A673 (cell line): ENCODE measurements at regions of chr3 and their contacts with region 1.

Region 1: GRCh38 chr3:148955544-148956346 is 35.6 kb upstream of the GYG1 start:
- DNase-seq: peak; percentile 63
- H3K4me3 ChIP-seq: no peak overlapping the region
- H3K27ac ChIP-seq: no peak overlapping the region
- H3K4me1 ChIP-seq: no peaks in the 10 kb centered on the region
- H3K27me3 ChIP-seq: no peaks in the 10 kb centered on the region
- CTCF ChIP-seq: peak; percentile 77

Region 2: DNA sequence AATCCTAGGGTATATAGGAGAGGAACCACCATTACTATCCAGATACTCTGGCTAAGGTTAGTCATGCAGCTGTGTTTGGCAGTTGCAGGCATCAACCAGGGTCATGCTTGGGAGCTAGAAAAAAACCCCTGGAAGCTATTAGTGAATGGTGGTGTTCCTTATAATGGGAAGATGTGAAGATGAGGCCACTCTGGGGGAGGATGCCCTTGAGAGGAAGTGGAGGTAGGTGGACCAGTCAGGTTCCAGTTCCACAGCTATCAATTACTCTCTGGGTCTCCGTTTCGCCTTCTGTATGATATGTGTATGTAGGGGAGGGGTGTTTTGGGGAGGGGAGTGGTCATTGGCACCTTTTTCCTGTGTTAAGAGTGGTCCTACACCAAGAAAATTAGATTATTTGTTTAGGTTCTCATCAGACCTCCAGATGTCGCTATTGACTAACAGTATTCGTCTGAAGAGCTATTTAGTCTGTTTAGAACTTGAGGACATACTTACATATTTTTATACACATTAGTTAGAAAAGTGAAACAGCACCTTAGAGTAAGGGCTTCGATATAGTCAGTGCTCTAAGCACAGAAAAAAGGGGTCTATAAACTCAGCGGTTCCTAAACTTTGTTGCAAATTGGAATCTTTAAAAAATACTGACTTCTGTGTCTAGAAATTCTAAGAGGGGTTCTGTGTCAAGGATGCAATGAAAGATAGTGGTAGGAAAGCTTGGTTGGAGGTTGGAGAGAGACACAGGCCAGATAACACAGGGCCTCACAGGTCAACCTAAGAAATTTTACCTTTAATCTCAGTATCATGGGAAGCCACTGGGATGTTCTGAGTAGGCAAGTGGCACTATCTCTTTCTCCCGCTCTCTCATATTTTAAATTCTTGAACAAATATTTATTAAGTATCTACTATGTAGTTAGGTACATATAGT is 164.6 kb after region 1 on chr3:
- CTCF ChIA-PET with region 1: interaction called, 38 read pairs
- POLR2A ChIA-PET with region 1: no interaction called
- intact Hi-C with region 1: loop called (anchors 2 kb)
- DNase-seq: peak; percentile 70
- H3K4me3 ChIP-seq: no peak overlapping the region
- H3K27ac ChIP-seq: no peak overlapping the region
- H3K4me1 ChIP-seq: no peaks in the 10 kb centered on the region
- H3K27me3 ChIP-seq: no peaks in the 10 kb centered on the region
- CTCF ChIP-seq: peak; percentile 69

Region 3: DNA sequence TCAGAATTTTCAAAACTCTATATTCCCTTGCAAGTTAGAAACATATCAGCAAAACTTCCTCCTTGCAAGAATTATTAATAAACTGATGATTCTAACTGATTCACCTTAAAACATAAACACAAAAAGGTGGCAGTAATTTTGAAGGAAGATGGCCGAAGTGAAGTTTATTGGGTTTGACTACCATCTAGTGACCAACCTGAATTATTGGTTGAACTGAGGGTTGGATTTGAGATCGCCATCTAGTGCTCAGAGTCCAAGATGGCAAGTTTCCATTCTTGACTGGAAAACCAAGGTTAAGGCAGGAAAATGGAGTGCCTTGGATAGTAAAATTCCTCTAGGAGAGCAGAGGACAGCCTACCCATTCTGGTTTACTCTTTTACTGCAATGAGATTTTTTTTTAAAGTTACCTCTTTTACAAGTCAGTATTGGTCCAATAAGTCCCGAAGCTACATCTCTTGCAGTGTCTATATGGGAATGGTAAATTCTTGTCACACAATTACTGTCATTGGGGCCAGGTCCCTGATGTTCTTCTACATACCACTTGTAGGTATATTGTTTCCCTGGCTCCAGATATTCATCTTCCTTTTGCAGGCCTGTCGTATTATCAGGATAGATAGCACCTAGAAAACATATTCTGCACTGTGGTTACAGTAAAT is 317.5 kb after region 1 on chr3:
- CTCF ChIA-PET with region 1: interaction called, 13 read pairs
- POLR2A ChIA-PET with region 1: no interaction called
- intact Hi-C with region 1: loop called (anchors 1 kb)
- DNase-seq: peak; percentile 83
- H3K4me3 ChIP-seq: no peak overlapping the region
- H3K27ac ChIP-seq: no peak overlapping the region
- H3K4me1 ChIP-seq: no peaks in the 10 kb centered on the region
- H3K27me3 ChIP-seq: no peaks in the 10 kb centered on the region
- CTCF ChIP-seq: peak; percentile 98

Region 4: DNA sequence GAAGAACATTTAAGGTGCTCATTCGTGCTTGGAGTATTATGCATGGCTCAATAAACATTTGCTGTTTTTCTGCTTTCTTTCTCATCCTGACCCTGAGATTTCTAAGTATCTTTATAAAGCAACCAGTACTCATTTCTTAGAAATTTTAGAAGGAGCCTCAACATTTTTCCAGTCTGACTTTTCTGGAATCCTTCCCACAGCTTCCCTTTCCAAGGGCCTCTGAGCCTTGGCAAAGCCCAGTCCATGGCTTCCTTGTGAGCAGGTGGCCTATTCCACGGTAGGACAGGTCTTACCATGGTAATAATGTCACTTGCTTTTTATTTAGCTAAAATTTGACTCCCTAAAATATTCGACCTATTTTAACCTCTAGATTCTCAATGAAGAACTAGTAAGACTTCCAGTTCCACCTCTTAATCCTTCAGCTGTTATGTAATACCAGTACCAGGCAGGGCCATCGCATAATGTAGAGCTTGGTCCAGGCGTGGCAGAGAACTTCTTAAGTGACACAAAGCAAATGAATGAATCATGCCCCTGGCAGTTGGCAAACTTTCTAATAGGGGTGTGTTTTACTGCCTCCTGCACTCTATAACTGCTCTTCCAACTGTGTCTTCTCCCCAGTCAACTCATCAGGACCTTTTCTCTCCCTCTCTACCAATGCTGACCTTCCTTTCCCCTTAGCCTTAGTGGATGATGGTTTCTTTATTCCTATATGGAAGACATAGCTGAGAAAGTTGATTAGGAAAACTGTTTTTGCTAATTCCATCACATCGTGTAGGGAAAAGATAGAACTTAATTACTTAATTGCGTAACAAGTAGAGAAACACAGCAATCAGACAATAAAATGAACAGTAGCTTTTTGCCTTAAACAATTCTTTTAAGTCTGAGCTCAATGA is 517.9 kb after region 1 on chr3:
- CTCF ChIA-PET with region 1: interaction called, 21 read pairs
- POLR2A ChIA-PET with region 1: no interaction called
- intact Hi-C with region 1: no loop called
- DNase-seq: peak; percentile 85
- H3K4me3 ChIP-seq: no peak overlapping the region
- H3K27ac ChIP-seq: no peak overlapping the region
- H3K4me1 ChIP-seq: peaks cover 6% of the 10 kb centered on the region
- H3K27me3 ChIP-seq: no peaks in the 10 kb centered on the region
- CTCF ChIP-seq: no peak

Region 5: DNA sequence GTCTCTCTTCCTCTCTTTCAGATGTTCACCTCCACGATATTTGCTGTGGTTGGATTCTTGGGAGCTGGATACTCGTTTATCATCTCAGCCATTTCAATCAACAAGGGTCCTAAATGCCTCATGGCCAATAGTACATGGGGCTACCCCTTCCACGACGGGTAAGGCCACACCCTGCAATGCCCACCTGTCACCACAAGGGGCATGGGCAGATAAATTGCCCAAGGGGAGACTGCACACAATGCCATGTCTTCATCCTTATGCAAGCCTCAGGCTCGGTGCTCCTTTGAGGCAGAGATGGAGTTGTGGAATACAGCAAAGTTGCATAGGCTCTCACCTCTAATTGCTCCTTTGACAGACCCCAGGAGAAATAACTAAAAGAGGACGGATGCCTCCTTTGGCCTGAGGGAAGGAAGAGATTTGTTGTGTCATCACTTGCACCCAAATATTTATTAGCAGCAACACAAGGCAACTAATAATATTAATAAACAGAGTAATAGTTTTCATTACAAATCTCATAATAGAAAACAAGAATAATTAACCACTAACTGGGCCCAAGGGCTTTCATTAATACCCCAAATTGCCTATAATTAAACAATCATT is 532.0 kb after region 1 on chr3:
- CTCF ChIA-PET with region 1: interaction called, 15 read pairs
- POLR2A ChIA-PET with region 1: no interaction called
- intact Hi-C with region 1: loop called (anchors 5 kb)
- DNase-seq: peak; percentile 59
- H3K4me3 ChIP-seq: no peak overlapping the region
- H3K27ac ChIP-seq: no peak overlapping the region
- H3K4me1 ChIP-seq: no peaks in the 10 kb centered on the region
- H3K27me3 ChIP-seq: peaks cover 4% of the 10 kb centered on the region
- CTCF ChIP-seq: peak; percentile 62